Endothelial cell of umbilical vein (primary cell): ENCODE measurements at regions of chr12 and their contacts with region 1.

Region 1: DNA sequence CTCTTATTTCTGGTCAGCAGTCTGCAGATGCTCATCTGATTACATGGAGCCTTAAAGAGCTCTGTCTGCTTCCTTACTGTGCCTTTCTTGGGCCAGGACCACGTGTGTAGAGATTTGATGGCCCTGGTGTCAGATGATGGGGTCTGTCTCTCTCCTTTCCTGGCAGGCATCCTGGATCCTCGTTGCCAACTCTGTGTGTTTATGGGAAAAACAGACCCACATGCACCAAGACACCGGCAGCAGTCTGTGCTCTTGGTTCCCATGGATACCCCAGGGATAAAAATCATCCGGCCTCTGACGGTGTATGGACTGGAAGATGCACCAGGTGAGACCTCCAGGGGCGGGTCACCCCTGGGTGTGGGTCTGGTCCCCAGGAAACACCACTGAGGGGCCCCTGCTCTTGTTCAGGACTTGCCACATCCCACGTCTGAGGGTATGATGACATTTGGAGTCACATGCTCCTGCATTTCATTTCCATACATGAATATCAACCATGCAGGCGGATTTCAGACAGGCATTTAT is 18.5 kb upstream of the ALDH2 start:
- DNase-seq: peak; percentile 40
- H3K4me3 ChIP-seq: no peak overlapping the region
- H3K27ac ChIP-seq: peak overlapping the region; percentile 7
- H3K4me1 ChIP-seq: peaks cover 18% of the 10 kb centered on the region
- H3K27me3 ChIP-seq: no peaks in the 10 kb centered on the region
- CTCF ChIP-seq: no peak
- POLR2A ChIP-seq: no peak

Region 2: GRCh38 chr12:111823891-111824290 is 75.7 kb after region 1 on chr12:
- CTCF ChIA-PET with region 1: interaction called, 3 read pairs
- POLR2A ChIA-PET with region 1: no interaction called
- dilution Hi-C with region 1: no loop called
- intact Hi-C with region 1: loop called (anchors 2 kb)
- DNase-seq: no peak
- H3K4me3 ChIP-seq: no peak overlapping the region
- H3K27ac ChIP-seq: no peak overlapping the region
- H3K4me1 ChIP-seq: no peaks in the 10 kb centered on the region
- H3K27me3 ChIP-seq: peaks cover 16 to 24% of the 10 kb centered on the region in 2 experiments
- CTCF ChIP-seq: no peak
- POLR2A ChIP-seq: no peak